ENCODE measurements at regions of chr2 and their contacts with region 1.

Region 1: DNA sequence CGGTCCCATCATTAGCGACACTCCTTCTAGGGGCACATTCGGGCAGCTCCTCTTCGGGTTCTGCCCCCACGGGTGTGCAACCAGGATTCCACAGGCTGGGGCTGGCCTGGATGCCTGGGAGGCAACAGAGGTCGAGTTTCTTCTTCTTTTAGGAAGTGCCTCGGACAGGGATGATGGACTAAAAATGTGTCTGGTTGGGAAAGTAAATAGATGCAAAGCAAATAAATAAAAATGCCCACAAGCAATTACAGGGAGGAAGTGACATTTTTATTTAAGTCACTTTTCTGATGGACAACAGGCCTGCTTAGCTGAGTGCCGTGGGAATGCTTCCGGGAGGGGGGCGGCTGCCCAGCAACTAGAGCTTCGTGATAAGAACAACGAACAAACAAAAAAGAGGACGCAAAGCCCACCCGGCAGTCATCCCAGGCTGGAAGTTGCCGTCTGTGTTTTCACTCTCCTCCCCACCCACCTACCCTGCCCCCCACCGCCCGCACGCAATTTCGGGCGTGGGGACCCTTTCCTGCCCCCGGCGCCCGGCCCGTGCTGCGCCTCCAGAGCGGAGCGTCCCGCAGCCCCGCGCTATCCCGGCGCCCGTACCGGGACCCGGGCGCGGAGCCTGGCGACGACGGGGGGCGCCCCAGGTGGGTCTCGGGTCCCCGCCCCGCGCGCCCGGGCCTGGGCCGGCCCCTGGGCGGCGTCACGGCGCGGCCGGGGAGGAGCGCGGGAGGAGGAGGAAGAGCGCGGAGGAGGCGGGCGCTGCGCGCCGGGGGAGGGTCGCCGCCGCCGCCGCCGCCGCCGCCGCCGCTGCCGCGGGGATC is 412 bp upstream of the NCK2 start:
- DNase-seq: peak; percentile 70
- H3K4me3 Mint-ChIP-seq: peak overlapping the region; percentile 76
- H3K27ac Mint-ChIP-seq: peak overlapping the region; percentile 86
- H3K4me1 Mint-ChIP-seq: peaks cover 80% of the 10 kb centered on the region
- H3K27me3 Mint-ChIP-seq: no peaks in the 10 kb centered on the region

Region 2: DNA sequence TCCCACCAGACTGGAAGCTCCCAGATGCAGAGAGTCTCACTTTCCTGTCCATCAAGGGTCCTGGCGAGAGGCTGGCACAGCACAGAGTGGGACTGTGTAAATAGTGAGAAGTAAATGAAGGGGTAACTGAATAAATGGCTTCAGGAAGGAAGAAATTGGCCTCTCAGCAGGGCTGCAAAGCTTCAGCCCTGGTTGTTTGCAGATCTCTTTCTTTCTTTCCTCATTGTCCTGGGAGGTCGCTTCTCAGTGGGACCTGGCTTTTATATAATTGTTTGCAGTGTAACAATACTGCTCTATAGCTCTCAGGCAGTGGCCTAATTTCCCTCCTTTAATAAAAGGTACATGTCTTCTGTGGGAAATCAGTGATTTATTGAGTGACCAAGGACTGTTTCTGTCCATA is 577.6 kb before region 1 on chr2:
- CTCF ChIA-PET with region 1: no interaction called
- POLR2A ChIA-PET with region 1: no interaction called
- intact Hi-C with region 1: no loop called
- DNase-seq: no peak
- H3K4me3 Mint-ChIP-seq: no peak overlapping the region
- H3K27ac Mint-ChIP-seq: no peak overlapping the region
- H3K4me1 Mint-ChIP-seq: no peaks in the 10 kb centered on the region
- H3K27me3 Mint-ChIP-seq: peaks cover 7% of the 10 kb centered on the region

Region 3: DNA sequence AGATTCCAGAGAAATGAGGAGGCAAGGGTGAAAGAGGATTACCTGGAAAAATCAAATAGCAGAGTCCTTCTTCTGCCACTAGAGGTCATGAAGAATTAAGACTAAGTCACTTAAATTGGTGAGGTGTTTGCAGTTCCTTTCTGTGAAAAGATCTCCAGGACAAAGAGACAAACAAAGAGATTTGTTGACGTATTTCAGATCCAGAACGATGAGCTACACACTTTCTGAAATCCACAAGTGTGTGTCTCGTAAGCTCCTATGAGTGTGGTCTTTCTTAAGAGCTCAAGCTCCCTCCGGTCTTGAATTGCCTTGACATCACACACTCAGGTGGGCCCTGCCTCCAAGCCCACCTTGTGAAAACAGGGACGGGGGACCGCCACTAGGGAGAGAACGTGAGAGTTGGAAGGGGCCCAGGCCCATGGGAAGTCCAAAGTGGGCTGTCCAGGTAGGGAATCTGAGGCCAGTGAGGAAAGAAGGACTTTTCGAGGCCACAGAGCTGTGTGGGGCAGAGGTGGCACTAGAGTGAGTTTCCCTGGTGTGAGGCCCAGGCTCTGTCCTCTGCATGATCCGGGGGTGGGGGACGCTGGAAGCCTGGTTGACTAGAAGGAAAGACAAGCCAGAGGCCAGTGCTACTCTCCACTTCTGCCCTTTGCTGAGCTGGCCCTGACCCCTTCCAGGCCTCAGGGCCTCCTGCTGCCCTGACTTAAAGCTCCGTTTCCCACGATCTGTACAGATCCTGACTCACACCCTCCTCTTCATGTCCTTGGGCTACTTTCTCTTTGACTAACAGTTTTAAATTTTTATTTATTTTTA is 167.7 kb before region 1 on chr2:
- CTCF ChIA-PET with region 1: interaction called, 13 read pairs
- POLR2A ChIA-PET with region 1: interaction called, 3 read pairs
- intact Hi-C with region 1: loop called (anchors 1 kb)
- DNase-seq: peak; percentile 20
- H3K4me3 Mint-ChIP-seq: no peak overlapping the region
- H3K27ac Mint-ChIP-seq: peak overlapping the region; percentile 75
- H3K4me1 Mint-ChIP-seq: peaks cover 18% of the 10 kb centered on the region
- H3K27me3 Mint-ChIP-seq: no peaks in the 10 kb centered on the region

Region 4: GRCh38 chr2:105712981-105713596 is 31.2 kb before region 1 on chr2:
- CTCF ChIA-PET with region 1: no interaction called
- POLR2A ChIA-PET with region 1: no interaction called
- intact Hi-C with region 1: no loop called
- DNase-seq: no peak
- H3K4me3 Mint-ChIP-seq: no peak overlapping the region
- H3K27ac Mint-ChIP-seq: no peak overlapping the region
- H3K4me1 Mint-ChIP-seq: peaks cover 2% of the 10 kb centered on the region
- H3K27me3 Mint-ChIP-seq: peaks cover 1% of the 10 kb centered on the region

Region 5: GRCh38 chr2:105755895-105756294 is 11.6 kb after region 1 on chr2:
- CTCF ChIA-PET with region 1: interaction called, 16 read pairs
- POLR2A ChIA-PET with region 1: interaction called, 91 read pairs
- intact Hi-C with region 1: loop called (anchors 1 kb)
- DNase-seq: no peak
- H3K4me3 Mint-ChIP-seq: peak overlapping the region; percentile 55
- H3K27ac Mint-ChIP-seq: peak overlapping the region; percentile 93
- H3K4me1 Mint-ChIP-seq: peaks cover 95% of the 10 kb centered on the region
- H3K27me3 Mint-ChIP-seq: no peaks in the 10 kb centered on the region

Region 6: DNA sequence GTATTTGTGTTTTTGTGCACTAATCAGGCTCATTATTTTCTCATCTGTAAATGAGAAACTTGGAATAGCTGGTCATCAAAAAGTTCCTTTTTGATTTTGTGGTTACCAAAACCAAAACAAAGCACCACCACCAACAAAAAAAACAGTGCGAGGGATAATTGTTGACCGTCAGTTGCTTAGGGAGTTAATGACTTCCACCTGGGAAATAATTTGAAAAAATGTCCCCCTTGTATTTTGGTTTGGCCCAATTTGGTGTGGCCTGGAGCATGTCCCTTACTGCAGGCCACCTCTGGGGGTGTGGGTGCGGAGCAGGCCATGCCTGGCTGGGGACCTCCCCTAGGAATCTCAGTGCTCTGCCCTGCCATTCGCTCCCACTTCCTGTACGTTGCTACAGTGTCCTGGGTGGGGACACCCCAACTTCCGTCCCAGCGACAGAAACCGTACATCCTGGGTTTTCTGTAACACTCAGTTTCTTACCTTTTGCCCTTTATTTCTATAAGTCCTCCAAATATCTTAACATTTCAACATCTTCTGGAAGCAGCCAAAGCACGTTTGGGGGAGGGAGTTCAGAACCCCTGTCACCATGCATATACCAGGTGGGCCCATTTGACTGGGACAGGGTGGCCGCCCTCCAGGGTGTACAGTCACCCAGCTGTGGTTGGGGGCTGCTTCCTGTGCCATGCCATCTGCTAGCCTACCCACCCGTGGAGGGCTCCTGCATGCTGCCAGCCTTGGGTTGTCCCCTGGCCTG is 31.7 kb after region 1 on chr2:
- CTCF ChIA-PET with region 1: interaction called, 4 read pairs
- POLR2A ChIA-PET with region 1: interaction called, 23 read pairs
- intact Hi-C with region 1: no loop called
- DNase-seq: peak; percentile 56
- H3K4me3 Mint-ChIP-seq: peak overlapping the region; percentile 24
- H3K27ac Mint-ChIP-seq: peak overlapping the region; percentile 77
- H3K4me1 Mint-ChIP-seq: peaks cover 90% of the 10 kb centered on the region
- H3K27me3 Mint-ChIP-seq: no peaks in the 10 kb centered on the region

Region 7: DNA sequence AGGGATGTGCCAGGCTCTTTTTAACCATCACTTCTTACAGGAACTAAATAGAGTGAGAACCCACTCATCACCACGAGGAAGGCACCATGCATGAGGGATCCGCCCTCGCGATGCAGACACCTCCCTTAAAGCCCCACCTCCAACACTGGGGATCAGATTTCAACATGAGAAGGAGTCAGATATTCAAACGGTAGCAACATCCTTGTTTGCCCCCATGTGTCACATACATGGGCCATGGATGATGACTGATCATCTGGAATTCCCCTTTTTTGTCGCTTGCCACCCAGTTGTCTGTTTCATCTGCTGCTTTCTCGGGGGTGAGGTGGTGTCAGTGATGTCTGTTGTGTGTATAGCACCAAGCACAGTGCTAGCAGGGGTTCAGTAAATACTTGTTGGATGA is 58.3 kb after region 1 on chr2:
- CTCF ChIA-PET with region 1: interaction called, 9 read pairs
- POLR2A ChIA-PET with region 1: interaction called, 20 read pairs
- intact Hi-C with region 1: loop called (anchors 2 kb)
- DNase-seq: peak; percentile 83
- H3K4me3 Mint-ChIP-seq: peak overlapping the region; percentile 27
- H3K27ac Mint-ChIP-seq: peak overlapping the region; percentile 87
- H3K4me1 Mint-ChIP-seq: peaks cover 97% of the 10 kb centered on the region
- H3K27me3 Mint-ChIP-seq: no peaks in the 10 kb centered on the region

Region 8: GRCh38 chr2:106085181-106085940 is 341.1 kb after region 1 on chr2:
- CTCF ChIA-PET with region 1: no interaction called
- POLR2A ChIA-PET with region 1: no interaction called
- intact Hi-C with region 1: loop called (anchors 2 kb)
- DNase-seq: peak; percentile 78
- H3K4me3 Mint-ChIP-seq: peak overlapping the region; percentile 68
- H3K27ac Mint-ChIP-seq: peak overlapping the region; percentile 89
- H3K4me1 Mint-ChIP-seq: peaks cover 64% of the 10 kb centered on the region
- H3K27me3 Mint-ChIP-seq: no peaks in the 10 kb centered on the region

Region 9: DNA sequence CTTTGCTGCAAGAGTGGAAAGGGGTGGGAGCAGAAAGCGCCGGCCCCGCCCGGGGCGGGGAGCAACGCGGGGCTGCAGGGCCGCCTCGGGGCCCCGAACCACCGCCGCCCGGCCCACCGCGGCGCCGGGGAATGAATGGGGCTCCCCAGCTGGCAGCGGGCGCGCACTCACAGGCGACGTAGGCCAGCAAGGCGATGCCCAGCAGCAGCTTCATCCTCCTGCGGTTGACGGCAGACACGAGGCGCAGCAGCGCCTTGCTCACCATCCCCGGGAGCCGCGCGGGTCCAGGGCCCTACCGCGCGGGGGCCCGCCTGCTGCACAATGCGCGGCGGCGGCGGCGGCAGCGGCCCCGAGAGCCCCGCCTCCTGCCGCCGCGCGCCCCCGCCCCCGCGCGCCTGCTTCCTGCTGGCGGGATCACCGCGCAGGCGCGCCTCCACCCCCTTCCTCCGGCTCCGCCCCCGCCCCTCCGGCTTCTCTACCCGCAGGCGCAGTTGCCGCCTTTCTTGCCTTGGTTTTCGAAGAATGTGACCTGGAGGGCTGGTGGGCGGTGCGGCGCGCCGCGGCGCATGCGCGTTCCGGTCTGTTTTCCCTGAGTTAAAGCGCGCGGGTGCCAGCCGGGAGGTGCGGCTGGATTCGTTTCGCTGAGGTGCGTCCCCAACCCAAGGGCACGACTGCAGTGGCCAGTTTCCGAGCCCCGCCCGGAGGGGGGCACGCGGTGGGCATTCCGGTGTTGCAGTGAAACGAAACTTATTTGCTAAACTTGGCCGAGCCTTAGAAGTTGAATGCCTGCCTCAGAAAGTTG is 449.9 kb after region 1 on chr2 and contains the start of gene UXS1:
- CTCF ChIA-PET with region 1: no interaction called
- POLR2A ChIA-PET with region 1: no interaction called
- intact Hi-C with region 1: loop called (anchors 5 kb)
- DNase-seq: peak; percentile 99
- H3K4me3 Mint-ChIP-seq: peak within 1 kb of the TSS; percentile 84
- H3K27ac Mint-ChIP-seq: peak within 1 kb of the TSS; percentile 87
- H3K4me1 Mint-ChIP-seq: peaks cover 40% of the 10 kb centered on the region
- H3K27me3 Mint-ChIP-seq: peaks cover 2% of the 10 kb centered on the region
- total RNA-seq, gene UXS1: 39.2 to 41.5 TPM

Region 10: GRCh38 chr2:106342831-106343251 is 598.5 kb after region 1 on chr2:
- CTCF ChIA-PET with region 1: no interaction called
- POLR2A ChIA-PET with region 1: no interaction called
- intact Hi-C with region 1: no loop called
- DNase-seq: no peak
- H3K4me3 Mint-ChIP-seq: no peak overlapping the region
- H3K27ac Mint-ChIP-seq: no peak overlapping the region
- H3K4me1 Mint-ChIP-seq: peaks cover under 1% of the 10 kb centered on the region
- H3K27me3 Mint-ChIP-seq: no peaks in the 10 kb centered on the region

Measured in activated CD4-positive, alpha-beta memory T cell treated with anti-CD3 and anti-CD28 coated beads for 36 hours (primary cell).